Panc1 (cell line): ENCODE measurements at regions of chr2 and their contacts with region 1.

Region 1: GRCh38 chr2:80326214-80326613 is 21.7 kb upstream of the LRRTM1 start:
- DNase-seq: peak; percentile 17
- ATAC-seq: no peak
- H3K4me3 ChIP-seq: no peak overlapping the region
- H3K27ac ChIP-seq: no peak overlapping the region
- H3K4me1 ChIP-seq: no peaks in the 10 kb centered on the region
- H3K27me3 ChIP-seq: no peaks in the 10 kb centered on the region
- CTCF ChIP-seq: peak; percentile 38

Region 2: GRCh38 chr2:80299661-80300060 is 26.6 kb before region 1 on chr2:
- CTCF ChIA-PET with region 1: no interaction called
- POLR2A ChIA-PET with region 1: no interaction called
- in situ Hi-C with region 1: no loop called
- intact Hi-C with region 1: no loop called
- DNase-seq: no peak
- ATAC-seq: no peak
- H3K4me3 ChIP-seq: no peak overlapping the region
- H3K27ac ChIP-seq: no peak overlapping the region
- H3K4me1 ChIP-seq: no peaks in the 10 kb centered on the region
- H3K27me3 ChIP-seq: no peaks in the 10 kb centered on the region
- CTCF ChIP-seq: no peak

Region 3: DNA sequence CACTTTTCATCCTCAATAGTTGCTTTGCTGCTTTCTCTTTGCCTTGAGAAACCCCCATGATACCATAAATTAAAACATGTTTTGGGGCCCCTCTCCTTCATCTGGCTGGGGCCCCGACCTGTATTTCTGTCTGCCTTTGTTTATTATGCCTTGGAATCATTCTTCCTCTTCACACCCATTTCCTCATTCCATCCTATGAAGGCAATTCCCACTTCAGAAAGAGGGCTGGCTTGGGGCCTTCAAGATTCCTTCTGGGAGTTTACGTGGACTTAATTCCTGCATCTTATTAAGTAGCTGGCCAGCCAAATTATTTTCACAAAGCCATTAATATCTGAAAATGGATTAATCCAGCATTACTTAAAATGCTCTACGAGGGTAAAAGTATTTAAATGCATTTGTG is 14.9 kb before region 1 on chr2:
- CTCF ChIA-PET with region 1: no interaction called
- POLR2A ChIA-PET with region 1: no interaction called
- in situ Hi-C with region 1: no loop called
- intact Hi-C with region 1: loop called (anchors 1 kb)
- DNase-seq: no peak
- ATAC-seq: no peak
- H3K4me3 ChIP-seq: no peak overlapping the region
- H3K27ac ChIP-seq: no peak overlapping the region
- H3K4me1 ChIP-seq: no peaks in the 10 kb centered on the region
- H3K27me3 ChIP-seq: no peaks in the 10 kb centered on the region
- CTCF ChIP-seq: no peak

Region 4: DNA sequence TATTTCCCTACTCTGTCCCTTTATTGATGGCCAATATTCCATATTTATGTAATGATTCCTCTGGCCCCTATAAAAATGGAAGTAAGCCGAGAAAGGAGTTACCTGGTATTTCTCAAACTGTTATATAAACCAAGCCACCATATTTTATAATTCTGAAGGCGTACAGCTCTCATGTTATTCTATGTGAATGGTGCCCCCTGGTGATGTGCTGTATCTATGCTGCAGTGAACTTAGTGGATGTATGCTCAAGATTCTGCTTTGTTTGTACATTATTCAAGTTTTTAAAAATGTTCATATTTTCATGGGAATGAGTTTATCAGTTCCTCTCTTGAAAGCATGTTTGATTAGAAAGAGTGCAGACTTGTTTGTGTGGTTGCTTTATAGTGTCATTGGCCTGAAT is 172.9 kb after region 1 on chr2:
- CTCF ChIA-PET with region 1: interaction called, 7 read pairs
- POLR2A ChIA-PET with region 1: no interaction called
- in situ Hi-C with region 1: no loop called
- intact Hi-C with region 1: loop called (anchors 2 kb)
- DNase-seq: no peak
- ATAC-seq: no peak
- H3K4me3 ChIP-seq: no peak overlapping the region
- H3K27ac ChIP-seq: no peak overlapping the region
- H3K4me1 ChIP-seq: no peaks in the 10 kb centered on the region
- H3K27me3 ChIP-seq: no peaks in the 10 kb centered on the region
- CTCF ChIP-seq: peak; percentile 37; the same call in 1 of the 2 replicates